Right lobe of liver (tissue), 6 donors: ENCODE measurements at regions of chr6 and their contacts with region 1.

Region 1: DNA sequence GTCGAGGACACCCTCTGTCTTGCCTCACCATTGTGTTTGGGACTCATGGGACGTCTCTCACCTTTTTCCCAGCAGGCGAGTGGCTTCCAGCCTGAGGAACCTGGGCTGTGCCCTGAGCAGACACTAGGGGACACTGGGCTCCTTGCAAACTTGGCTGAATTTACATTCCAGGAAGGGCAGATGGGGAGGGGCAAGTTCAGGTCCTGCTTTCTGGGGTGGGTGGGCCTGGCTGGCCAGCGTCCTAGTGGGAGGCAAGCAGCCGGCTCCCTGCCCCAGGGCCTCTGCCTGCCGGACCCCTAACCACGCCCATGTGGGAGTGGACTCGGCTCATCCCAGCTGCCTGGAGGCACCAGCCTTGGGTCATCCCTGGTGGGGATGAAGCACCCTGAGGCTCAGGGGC is 48.2 kb upstream of the MLN start:
- DNase-seq: no peak
- ATAC-seq: peak; percentile 56 to 73 (median 65)
- H3K4me3 ChIP-seq: no peak overlapping the region
- H3K27ac ChIP-seq: no peak overlapping the region
- H3K4me1 ChIP-seq: no peaks in the 10 kb centered on the region
- H3K27me3 ChIP-seq: no peaks in the 10 kb centered on the region
- CTCF ChIP-seq: peak; percentile 40 to 56 (median 46)
- POLR2A ChIP-seq: no peak

Region 2: DNA sequence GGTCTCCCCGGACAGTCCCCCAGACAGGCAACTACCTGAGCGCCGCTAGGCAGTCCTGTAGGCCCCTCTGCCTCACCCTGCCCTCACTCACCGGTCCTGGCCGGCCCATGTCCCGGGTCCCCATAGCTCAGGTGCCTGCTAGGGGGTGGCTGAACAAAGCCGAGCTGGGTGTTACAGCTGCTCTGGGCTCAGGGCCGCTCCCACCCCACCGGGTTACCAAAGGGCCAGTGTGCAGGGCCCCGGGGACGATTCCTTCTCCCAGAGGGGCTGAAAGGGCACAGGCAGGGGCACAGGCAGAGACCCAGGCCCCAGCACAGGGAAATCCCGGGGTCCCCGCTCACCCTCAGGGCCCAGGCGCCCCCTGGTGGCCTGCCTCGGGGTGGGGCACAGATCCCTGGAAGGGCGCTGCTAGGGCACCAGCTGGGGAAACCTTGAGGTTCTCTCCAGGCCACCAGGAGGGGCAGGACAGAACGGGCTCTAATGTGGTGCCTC is 175.5 kb after region 1 on chr6:
- intact Hi-C with region 1: loop called (anchors 10 kb)
- DNase-seq: peak; percentile 53 to 67 (median 62)
- ATAC-seq: peak; percentile 66 to 85 (median 78)
- H3K4me3 ChIP-seq: no peak overlapping the region
- H3K27ac ChIP-seq: no peak overlapping the region
- H3K4me1 ChIP-seq: no peaks in the 10 kb centered on the region
- H3K27me3 ChIP-seq: no peaks in the 10 kb centered on the region
- CTCF ChIP-seq: peak; percentile 87 to 91 (median 89)
- POLR2A ChIP-seq: no peak

Region 3: DNA sequence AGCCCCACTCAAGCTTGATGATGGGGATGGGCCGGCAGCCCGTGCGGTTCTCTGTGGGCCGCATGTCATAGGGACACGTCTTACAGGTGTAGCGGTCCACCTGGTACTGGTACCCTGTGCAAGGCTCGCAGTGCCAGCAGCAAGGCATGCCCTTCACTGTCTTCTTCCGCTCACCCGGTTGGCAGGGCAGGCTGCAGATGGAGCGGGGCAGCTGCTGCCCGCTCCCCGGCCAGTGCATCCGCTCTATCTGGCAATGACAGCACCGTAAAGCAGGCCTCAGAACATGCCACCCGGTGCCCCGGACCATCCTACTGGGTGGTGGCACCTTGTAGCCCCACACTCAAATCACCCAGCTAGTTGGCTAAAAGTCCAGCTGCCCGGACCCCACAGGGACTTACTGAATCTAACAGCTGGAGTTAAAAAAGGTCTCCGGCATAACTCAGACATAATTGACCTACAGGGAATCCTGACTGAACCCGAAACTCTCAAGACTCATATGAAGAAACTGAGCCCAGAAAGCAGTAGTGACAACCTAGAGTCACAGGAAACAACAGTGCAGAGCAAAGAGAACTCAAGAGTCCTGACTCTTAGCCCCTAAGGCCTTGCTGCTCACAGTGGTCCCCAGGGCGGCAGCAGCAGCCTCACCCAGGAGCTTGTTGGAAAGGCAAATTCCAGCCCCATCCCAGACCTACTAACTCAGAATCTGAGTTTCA is 184.6 kb after region 1 on chr6:
- intact Hi-C with region 1: loop called in 1 of 2 experiments (anchors 10 kb)
- DNase-seq: no peak
- ATAC-seq: no peak
- H3K4me3 ChIP-seq: no peak overlapping the region
- H3K27ac ChIP-seq: no peak overlapping the region
- H3K4me1 ChIP-seq: no peaks in the 10 kb centered on the region
- H3K27me3 ChIP-seq: no peaks in the 10 kb centered on the region
- CTCF ChIP-seq: no peak
- POLR2A ChIP-seq: no peak

Region 4: GRCh38 chr6:34110610-34111009 is 258.7 kb after region 1 on chr6:
- intact Hi-C with region 1: no loop called
- DNase-seq: no peak
- ATAC-seq: no peak
- H3K4me3 ChIP-seq: no peak overlapping the region
- H3K27ac ChIP-seq: no peak overlapping the region
- H3K4me1 ChIP-seq: no peaks in the 10 kb centered on the region
- H3K27me3 ChIP-seq: no peaks in the 10 kb centered on the region
- CTCF ChIP-seq: no peak
- POLR2A ChIP-seq: no peak